Heart right ventricle (tissue), 16 donors: ENCODE measurements at regions of chr5 and their contacts with region 1.

Region 1: DNA sequence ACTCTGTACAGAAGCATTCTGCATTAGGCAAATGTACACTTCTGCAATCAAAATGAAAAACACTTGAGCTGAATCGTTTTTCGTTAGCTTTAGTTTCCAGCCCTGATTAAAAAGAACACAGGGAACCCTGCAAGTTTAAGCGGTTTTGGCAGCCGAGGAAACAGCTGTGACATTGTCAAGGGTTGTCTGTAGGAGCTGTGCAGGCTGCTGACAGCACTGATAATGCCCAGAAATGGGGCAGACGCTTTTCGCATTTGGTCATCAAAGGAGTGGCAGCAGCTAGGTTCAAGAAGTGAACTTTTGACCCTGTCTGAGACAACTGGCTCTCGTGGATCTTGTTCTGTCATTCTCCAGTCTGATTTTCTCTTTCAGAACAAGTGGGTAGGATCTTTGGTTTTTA is 165.6 kb upstream of the CCDC152 start:
- DNase-seq: peak; percentile 55 to 70
- ATAC-seq: peak; percentile 74 to 93 (median 84)
- H3K4me3 ChIP-seq: peak overlapping the region in 3 of 10 donors; percentile 6 to 10 (median 7)
- H3K27ac ChIP-seq: peak overlapping the region; percentile 10 to 76 (median 40)
- H3K4me1 ChIP-seq: peaks cover 0 to 68% (median 45%) of the 10 kb centered on the region in 9 donors
- H3K27me3 ChIP-seq: no peaks in the 10 kb centered on the region
- CTCF ChIP-seq: no peak

Region 2: GRCh38 chr5:42632354-42632900 is 41.4 kb after region 1 on chr5:
- intact Hi-C with region 1: loop called in 1 of 10 experiments (anchors 5 kb)
- DNase-seq: no peak
- ATAC-seq: no peak
- H3K4me3 ChIP-seq: no peak overlapping the region
- H3K27ac ChIP-seq: no peak overlapping the region
- H3K4me1 ChIP-seq: peaks cover 0 to 18% (median 5%) of the 10 kb centered on the region in 9 donors
- H3K27me3 ChIP-seq: no peaks in the 10 kb centered on the region
- CTCF ChIP-seq: no peak